ENCODE measurements at regions of chr20 and their contacts with region 1.

Region 1: GRCh38 chr20:48912065-48912762 is 9.3 kb upstream of the ARFGEF2 start:
- DNase-seq: no peak
- H3K4me3 ChIP-seq: no peak overlapping the region
- H3K27ac ChIP-seq: no peak overlapping the region
- H3K27me3 ChIP-seq: no peaks in the 10 kb centered on the region
- CTCF ChIP-seq: no peak

Region 2: DNA sequence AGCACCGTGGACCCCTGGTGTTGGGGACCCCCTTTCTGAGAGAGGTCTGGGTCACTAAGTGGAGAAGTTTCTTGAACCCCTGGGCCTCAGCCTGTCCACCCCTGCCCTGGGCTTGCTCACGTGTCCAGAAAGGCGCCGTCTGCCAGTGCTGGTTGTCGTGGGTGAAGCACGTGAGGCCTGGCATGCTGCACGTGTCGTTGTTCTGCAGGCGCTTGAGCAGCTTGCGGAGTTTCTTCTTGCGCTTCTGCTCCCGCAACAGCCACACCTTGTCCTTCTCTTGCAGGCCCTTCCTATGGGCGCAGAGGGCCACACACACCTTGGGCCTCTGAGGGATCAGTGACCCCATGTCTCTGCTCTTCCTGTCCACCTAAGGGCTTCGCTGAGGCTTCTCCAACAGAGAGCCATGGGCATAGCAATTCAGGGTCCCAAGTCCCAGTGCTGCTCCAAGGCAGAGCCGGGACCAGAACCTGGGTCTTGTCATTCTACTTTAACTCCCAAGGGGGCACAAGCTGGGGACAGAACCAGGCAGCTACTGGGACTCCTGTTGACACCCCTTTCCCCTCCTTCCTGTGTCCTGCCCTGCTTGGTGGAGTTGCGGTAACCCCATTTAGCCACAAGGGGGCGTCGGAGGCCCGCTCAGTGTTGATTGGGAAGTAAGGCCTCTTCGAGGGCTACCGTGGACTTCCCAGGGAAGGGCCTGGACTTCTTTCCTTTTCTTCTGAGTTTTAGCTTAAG is 1248.7 kb before region 1 on chr20:
- intact Hi-C with region 1: loop called in 1 of 2 experiments (anchors 10 kb)
- DNase-seq: peak in 9 of 10 donors; percentile 68 to 88 (median 80)
- H3K4me3 ChIP-seq: no peak overlapping the region
- H3K27ac ChIP-seq: peak overlapping the region in 1 of 59 donors; percentile 26
- H3K27me3 ChIP-seq: no peaks in the 10 kb centered on the region
- CTCF ChIP-seq: peak; percentile 70 to 99 (median 96)